Activated T-helper 1 cell treated with anti-CD3 and anti-CD28 coated beads, Interleukin-12 subunit alpha, Interleukin-12 subunit beta, Interleukin-2, Interleukin-4 antibody, amounts not matched to agents 30 ng/mL and 10 ng/mL and 1 ng/mL, durations not matched to agents 14 hours and 24 hours and 36 hours (primary cell): ENCODE measurements at regions of chr5 and their contacts with region 1.

Region 1: DNA sequence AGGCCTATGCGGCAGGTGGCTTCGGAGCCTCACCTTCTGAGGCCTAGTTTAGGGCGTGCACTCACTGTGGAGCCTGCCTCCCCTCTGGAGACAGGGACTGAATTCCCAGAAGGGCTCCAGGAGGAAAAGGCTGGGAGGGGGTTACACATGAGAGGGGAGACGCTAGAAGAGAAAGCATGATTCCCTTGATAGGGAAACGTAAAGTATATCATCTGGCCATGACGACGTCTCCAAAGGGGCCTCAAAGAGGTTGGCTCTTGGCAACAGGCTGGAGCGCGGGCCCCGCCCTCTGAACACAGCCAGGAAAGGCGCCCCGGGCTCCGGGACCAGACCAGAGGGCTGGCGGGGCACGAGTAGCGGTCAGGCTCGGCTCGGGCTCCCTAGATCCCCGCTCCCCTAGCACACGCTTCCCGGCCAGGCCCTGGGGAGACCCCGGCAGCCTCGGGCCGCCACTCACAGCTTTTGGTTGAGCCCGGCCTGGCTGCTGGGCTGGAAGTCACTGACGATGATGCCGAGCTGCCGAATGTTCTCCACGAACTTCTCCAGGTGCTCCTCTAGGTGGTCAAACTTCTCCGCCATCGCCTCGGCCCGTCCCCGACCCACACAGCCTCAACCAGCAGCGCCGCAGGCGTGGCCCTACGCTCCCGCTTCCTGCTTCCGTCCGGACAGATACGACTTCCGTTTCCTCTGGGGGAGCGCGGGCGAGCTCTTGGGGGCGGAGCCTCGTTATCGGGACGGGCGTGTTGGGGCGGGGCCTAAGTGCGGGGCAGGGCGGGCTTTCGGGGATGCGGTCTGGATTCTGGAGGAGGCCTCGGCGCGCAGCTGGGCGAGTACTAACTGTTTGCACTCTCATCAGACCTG is at the start of gene MED10:
- DNase-seq: peak; percentile 92
- H3K4me3 Mint-ChIP-seq: peak within 1 kb of the TSS; percentile 95
- H3K27ac Mint-ChIP-seq: peak within 1 kb of the TSS; percentile 97
- H3K4me1 Mint-ChIP-seq: peaks cover 57% of the 10 kb centered on the region
- H3K27me3 Mint-ChIP-seq: peaks cover 3% of the 10 kb centered on the region
- total RNA-seq, gene MED10: 60.2 and 67.1 TPM in 2 replicates

Region 2: DNA sequence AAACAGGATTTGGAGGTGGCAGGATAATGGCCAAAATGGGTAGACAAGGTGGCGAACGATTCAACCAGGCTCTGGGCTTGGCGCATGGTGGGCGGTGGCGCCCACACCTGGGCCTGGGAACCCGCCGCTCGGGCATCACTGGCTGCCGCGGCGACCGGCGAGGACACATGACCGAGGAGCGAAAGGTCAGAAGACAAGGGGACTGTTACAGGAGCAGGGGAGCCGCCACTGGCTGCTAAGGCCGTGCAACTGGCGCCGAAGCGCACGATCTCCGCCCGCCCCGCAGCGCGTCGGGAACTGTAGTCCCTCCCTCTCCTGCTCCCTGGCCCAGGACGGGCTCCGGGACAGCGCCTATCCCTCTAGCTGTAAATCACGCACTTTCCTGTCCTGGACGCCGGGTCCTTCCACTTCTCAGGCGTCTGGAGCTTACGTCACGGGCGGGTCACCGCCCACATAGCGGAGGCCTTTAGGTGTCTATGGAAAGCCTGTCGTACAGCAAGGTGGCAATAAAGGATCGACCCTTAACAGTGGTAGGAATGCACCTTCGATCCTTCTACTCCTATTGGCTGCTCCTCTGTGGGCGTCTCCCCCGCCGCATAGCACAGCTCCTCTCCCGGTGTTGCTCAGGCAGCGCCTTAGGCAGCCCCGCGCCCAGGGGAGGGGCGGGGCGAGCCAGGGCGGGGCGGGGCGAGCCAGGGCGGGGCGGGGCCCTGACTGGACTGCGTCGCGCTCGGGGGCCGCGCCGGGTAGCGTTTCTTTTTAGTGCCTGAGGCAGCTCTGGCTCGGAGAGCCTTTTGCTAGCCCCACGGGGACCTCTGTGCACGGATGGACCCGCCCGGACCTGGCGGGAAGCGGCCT is 955.9 kb before region 1 on chr5 and contains the start of gene ICE1:
- intact Hi-C with region 1: loop called (anchors 1 kb)
- DNase-seq: peak; percentile 91
- H3K4me3 Mint-ChIP-seq: peak within 1 kb of the TSS; percentile 96
- H3K27ac Mint-ChIP-seq: peak within 1 kb of the TSS; percentile 98
- H3K4me1 Mint-ChIP-seq: peaks cover 18% of the 10 kb centered on the region
- H3K27me3 Mint-ChIP-seq: no peaks in the 10 kb centered on the region
- total RNA-seq, gene ICE1: 35.3 and 38.2 TPM in 2 replicates

Region 3: DNA sequence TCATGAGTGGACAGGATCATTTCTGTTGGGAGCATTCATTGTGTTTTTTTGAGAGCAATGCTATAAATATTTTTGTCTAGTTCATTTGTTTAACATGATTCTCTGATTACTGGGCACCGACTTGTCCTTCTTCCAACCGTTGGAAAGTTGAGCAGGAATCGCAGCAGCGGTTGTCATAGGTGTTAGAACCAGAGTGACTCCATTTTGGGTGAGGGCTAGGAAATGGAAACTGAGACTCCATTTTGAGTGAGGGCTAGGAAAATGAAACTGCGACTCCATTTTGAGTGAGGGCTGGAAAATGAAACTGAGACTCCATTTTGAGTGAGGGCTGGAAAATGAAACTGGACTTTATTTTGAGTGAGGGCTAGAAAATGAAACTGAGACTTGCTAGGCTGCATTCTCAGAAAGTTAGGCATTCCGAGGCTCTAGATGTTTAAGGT is 855.0 kb before region 1 on chr5:
- intact Hi-C with region 1: loop called (anchors 2 kb)
- DNase-seq: peak; percentile 43
- H3K4me3 Mint-ChIP-seq: peak overlapping the region; percentile 22
- H3K27ac Mint-ChIP-seq: peak overlapping the region; percentile 61
- H3K4me1 Mint-ChIP-seq: peaks cover 32% of the 10 kb centered on the region
- H3K27me3 Mint-ChIP-seq: no peaks in the 10 kb centered on the region

Region 4: DNA sequence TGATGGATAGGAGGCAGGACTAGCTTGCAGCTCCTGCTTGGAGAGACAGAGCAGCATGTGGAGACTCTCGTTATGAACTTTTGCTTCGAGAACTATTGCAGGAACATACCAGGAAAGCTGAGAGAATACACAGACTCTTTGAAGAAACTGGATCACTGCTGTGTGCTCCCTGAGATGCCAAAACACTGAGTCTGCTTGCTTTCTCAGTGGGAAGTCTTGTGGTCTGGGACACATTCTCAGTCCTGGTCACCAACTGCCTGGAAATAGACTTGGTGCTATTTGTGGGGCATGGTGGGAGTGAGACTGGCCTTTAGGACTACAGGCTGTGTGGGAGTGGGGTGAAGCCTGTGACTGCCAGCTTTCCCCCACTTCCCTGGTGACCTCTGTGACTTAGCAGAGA is 252.4 kb before region 1 on chr5:
- intact Hi-C with region 1: no loop called
- DNase-seq: no peak
- H3K4me3 Mint-ChIP-seq: no peak overlapping the region
- H3K27ac Mint-ChIP-seq: no peak overlapping the region
- H3K4me1 Mint-ChIP-seq: no peaks in the 10 kb centered on the region
- H3K27me3 Mint-ChIP-seq: no peaks in the 10 kb centered on the region

Region 5: GRCh38 chr5:6496207-6496584 is 118.1 kb after region 1 on chr5:
- intact Hi-C with region 1: loop called (anchors 1 kb)
- DNase-seq: peak; percentile 13
- H3K4me3 Mint-ChIP-seq: no peak overlapping the region
- H3K27ac Mint-ChIP-seq: peak overlapping the region; percentile 8
- H3K4me1 Mint-ChIP-seq: peaks cover 43% of the 10 kb centered on the region
- H3K27me3 Mint-ChIP-seq: peaks cover 3% of the 10 kb centered on the region

Region 6: DNA sequence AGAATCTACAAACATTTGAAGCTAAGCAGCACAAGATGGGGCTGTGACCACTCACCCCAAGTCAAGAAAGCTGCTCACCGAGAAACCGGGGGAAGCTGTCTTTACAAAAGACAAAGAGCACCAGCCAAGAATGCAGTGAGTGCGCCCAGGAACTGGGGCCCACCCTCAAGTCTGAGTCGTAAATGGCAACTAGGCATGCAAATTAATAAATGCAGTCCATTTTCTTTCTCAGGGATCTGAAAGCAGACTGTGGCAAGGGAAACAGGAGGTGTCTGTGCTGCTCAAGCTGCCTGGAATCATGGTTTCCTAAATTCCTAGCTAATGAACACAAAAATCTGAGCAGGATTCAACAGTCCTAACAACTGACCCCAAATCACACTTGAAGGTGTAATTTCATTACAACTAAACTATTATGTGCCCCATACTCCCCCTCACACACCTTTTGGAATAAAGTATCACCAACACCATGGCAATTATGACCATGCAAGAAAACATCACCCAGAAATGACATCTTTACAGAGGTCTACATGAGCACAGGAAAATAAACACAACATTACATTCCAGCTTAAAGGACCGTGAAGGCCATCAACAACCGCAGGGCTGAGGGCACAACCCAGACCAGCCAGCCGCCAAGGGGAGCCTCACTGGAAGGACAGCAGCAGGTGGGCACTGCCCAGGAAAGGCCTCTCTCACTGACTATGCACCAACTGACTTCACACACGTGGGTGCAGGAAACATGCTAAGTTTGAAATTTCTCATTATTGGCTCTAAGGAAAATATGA is 237.1 kb after region 1 on chr5:
- intact Hi-C with region 1: loop called (anchors 5 kb)
- DNase-seq: no peak
- H3K4me3 Mint-ChIP-seq: no peak overlapping the region
- H3K27ac Mint-ChIP-seq: peak overlapping the region; percentile 19
- H3K4me1 Mint-ChIP-seq: peaks cover 21% of the 10 kb centered on the region
- H3K27me3 Mint-ChIP-seq: no peaks in the 10 kb centered on the region

Region 7: DNA sequence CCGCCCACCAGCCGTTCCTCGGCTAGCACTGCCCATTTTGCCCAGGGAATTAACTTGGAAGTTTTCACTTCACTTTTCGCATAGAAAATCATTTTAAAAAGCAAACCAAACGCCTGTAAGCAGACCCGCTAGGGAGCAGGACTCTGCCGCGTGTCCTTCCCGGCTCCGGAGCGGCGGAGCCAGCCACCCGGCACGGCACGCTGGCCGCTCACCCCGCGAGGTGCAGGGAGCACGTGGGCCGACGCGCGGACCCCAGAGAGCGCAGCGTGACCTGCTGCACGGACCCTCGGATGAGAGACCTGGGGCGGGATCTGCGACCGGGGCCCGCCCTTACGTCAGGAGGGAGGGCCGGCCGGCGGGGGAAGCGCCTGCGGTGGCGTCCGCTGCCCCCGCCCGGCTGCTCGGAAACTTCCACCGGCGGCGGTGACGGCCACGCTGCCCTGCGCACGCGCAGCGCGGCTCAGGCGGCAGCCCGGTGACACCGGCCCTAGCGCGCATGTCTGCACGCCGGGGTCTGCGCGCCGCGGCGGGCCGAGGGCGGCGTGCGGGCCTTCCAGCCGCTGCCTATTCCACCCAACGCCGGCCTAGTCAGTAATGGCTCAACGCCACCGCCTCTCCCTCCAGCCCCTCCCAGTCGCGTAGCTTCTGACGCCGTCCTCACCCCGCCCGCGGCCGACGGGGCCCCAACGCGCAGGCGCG is 334.6 kb after region 1 on chr5:
- intact Hi-C with region 1: loop called (anchors 1 kb)
- DNase-seq: peak; percentile 97
- H3K4me3 Mint-ChIP-seq: peak overlapping the region; percentile 88
- H3K27ac Mint-ChIP-seq: peak overlapping the region; percentile 95
- H3K4me1 Mint-ChIP-seq: peaks cover 41% of the 10 kb centered on the region
- H3K27me3 Mint-ChIP-seq: no peaks in the 10 kb centered on the region

Region 8: GRCh38 chr5:7868773-7869473 is 1490.8 kb after region 1 on chr5 and contains the starts of genes FASTKD3 and MTRR:
- intact Hi-C with region 1: loop called (anchors 5 kb)
- DNase-seq: peak; percentile 87
- H3K4me3 Mint-ChIP-seq: peak within 1 kb of the TSS; percentile 97
- H3K27ac Mint-ChIP-seq: peak within 1 kb of the TSS; percentile 89
- H3K4me1 Mint-ChIP-seq: peaks cover 73% of the 10 kb centered on the region
- H3K27me3 Mint-ChIP-seq: no peaks in the 10 kb centered on the region
- total RNA-seq, gene FASTKD3: 13.5 and 18.6 TPM in 2 replicates
- total RNA-seq, gene MTRR: 83.0 and 90.4 TPM in 2 replicates